ENCODE measurements at regions of chr10 and their contacts with region 1.

Region 1: DNA sequence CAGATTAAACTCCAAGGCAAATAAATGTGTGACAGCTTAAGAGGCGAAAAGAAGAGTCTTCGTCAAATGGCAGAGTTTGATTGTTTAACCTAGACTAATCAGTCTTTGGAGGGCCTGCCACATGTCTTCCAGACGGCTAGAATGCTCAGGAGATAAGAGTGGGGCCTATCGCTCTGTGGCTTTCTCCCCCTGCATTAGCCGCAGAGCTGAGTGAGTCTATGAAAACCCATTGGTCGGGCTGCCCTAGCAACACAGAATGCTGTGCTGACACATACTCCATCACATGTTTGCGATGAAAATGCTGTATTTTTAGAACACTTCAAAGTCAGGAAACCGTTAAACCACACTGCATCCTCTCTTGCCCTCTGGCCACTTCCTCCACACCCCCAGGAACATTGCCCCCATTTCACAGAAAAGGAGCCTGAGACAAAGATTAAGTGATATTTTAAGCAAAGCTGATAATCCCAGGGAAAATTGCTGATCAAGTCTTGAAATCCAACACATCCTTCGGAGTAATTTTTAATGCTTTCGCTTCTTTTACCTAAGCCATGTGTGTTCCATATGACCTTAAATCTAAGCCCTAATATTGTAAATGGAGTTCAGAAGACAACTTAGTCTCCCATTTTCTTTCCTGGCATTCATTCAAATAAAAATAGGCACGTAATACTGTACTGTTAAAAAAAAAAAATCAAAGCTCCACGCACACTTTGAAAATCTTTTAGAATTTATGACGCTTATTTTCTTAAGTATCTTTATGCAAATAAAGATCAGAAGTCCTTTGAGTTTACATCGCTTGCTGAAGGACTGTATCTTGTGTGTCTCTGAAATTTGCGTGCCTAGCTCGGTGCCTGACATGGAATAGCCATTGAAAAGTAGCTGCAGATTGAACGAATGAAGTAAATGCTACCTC is 161.2 kb downstream of the CELF2 start:
- DNase-seq: peak; percentile 90
- H3K4me3 Mint-ChIP-seq: peak overlapping the region; percentile 82
- H3K27ac Mint-ChIP-seq: no peak overlapping the region
- H3K4me1 Mint-ChIP-seq: peaks cover 88% of the 10 kb centered on the region
- H3K27me3 Mint-ChIP-seq: no peaks in the 10 kb centered on the region

Region 2: GRCh38 chr10:10576937-10577336 is 601.9 kb before region 1 on chr10:
- CTCF ChIA-PET with region 1: no interaction called
- intact Hi-C with region 1: no loop called
- DNase-seq: no peak
- H3K4me3 Mint-ChIP-seq: no peak overlapping the region
- H3K27ac Mint-ChIP-seq: no peak overlapping the region
- H3K4me1 Mint-ChIP-seq: no peaks in the 10 kb centered on the region
- H3K27me3 Mint-ChIP-seq: peaks cover 17% of the 10 kb centered on the region

Region 3: GRCh38 chr10:10623958-10624566 is 554.8 kb before region 1 on chr10:
- CTCF ChIA-PET with region 1: no interaction called
- intact Hi-C with region 1: no loop called
- DNase-seq: no peak
- H3K4me3 Mint-ChIP-seq: no peak overlapping the region
- H3K27ac Mint-ChIP-seq: no peak overlapping the region
- H3K4me1 Mint-ChIP-seq: no peaks in the 10 kb centered on the region
- H3K27me3 Mint-ChIP-seq: peaks cover 8% of the 10 kb centered on the region

Region 4: GRCh38 chr10:11145495-11145855 is 33.4 kb before region 1 on chr10:
- CTCF ChIA-PET with region 1: interaction called, 10 read pairs
- intact Hi-C with region 1: no loop called
- DNase-seq: peak; percentile 81
- H3K4me3 Mint-ChIP-seq: peak overlapping the region; percentile 76
- H3K27ac Mint-ChIP-seq: peak overlapping the region; percentile 94
- H3K4me1 Mint-ChIP-seq: peaks cover 83% of the 10 kb centered on the region
- H3K27me3 Mint-ChIP-seq: no peaks in the 10 kb centered on the region

Region 5: DNA sequence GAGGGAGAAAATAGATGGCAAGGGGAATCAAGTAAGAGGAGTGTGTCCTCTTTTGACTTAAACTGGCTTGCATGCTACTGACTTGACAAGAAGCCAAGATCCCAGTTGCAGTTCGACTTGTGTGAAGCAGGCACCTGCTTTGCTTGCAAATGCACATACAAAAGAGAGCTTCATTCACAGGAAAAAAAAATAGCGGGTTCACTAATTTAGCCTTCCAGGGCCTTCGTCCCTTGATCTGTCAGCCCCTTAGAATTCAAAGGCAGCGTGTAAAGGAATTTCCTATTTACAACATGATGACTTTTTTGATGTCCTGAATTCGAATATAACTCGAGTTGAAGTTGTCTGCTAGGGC is 30.9 kb after region 1 on chr10:
- CTCF ChIA-PET with region 1: no interaction called
- intact Hi-C with region 1: loop called (anchors 1 kb)
- DNase-seq: peak; percentile 38
- H3K4me3 Mint-ChIP-seq: peak overlapping the region; percentile 60
- H3K27ac Mint-ChIP-seq: peak overlapping the region; percentile 95
- H3K4me1 Mint-ChIP-seq: peaks cover 99% of the 10 kb centered on the region
- H3K27me3 Mint-ChIP-seq: no peaks in the 10 kb centered on the region

Region 6: GRCh38 chr10:11301571-11302111 is 122.8 kb after region 1 on chr10:
- CTCF ChIA-PET with region 1: no interaction called
- intact Hi-C with region 1: no loop called
- DNase-seq: no peak
- H3K4me3 Mint-ChIP-seq: no peak overlapping the region
- H3K27ac Mint-ChIP-seq: peak overlapping the region; percentile 39
- H3K4me1 Mint-ChIP-seq: peaks cover 5% of the 10 kb centered on the region
- H3K27me3 Mint-ChIP-seq: no peaks in the 10 kb centered on the region

Region 7: DNA sequence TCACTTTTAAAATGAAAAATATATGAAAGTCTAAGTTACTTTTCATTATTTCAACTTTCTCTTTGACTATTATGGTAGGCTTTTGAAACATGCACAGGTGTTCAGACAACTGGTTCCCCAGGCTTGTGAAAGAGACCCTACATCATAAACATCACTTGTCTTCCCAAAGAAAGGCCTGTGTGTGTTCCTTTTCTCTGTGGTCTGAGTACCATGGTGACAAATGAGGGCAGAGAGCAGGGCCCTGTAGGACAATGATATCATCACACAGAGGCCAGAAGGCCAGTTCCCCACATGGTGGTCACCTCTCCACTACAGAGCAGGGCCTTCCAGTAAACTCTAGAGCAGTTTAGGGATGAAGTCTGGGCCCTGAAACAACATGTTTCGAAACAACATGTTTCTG is 143.8 kb after region 1 on chr10:
- CTCF ChIA-PET with region 1: no interaction called
- intact Hi-C with region 1: loop called (anchors 2 kb)
- DNase-seq: no peak
- H3K4me3 Mint-ChIP-seq: no peak overlapping the region
- H3K27ac Mint-ChIP-seq: peak overlapping the region; percentile 95
- H3K4me1 Mint-ChIP-seq: peaks cover 75% of the 10 kb centered on the region
- H3K27me3 Mint-ChIP-seq: no peaks in the 10 kb centered on the region

Region 8: DNA sequence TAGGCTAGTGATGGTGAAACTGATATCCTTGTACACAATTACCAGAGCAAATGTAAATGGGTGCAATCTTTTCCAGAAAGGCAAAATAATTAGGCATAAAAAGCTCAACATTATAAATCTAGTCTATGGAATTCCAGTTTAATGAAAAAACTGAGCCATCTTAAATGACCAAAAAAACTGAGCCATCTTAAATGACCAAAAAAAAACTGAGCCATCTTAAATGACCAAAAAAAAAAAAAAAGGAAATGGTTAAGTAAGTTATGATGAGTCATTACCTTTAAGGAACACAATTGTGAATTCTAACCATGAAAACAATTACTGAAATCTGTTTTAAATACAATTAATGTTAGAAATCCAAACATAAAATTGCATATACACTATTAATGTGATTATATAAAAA is 407.3 kb after region 1 on chr10:
- CTCF ChIA-PET with region 1: no interaction called
- intact Hi-C with region 1: loop called (anchors 10 kb)
- DNase-seq: no peak
- H3K4me3 Mint-ChIP-seq: no peak overlapping the region
- H3K27ac Mint-ChIP-seq: no peak overlapping the region
- H3K4me1 Mint-ChIP-seq: peaks cover 27% of the 10 kb centered on the region
- H3K27me3 Mint-ChIP-seq: no peaks in the 10 kb centered on the region

Region 9: GRCh38 chr10:12129222-12130111 is 950.6 kb after region 1 on chr10 and contains the start of gene SEC61A2:
- CTCF ChIA-PET with region 1: no interaction called
- intact Hi-C with region 1: loop called (anchors 10 kb)
- DNase-seq: peak; percentile 97
- H3K4me3 Mint-ChIP-seq: peak within 1 kb of the TSS; percentile 83
- H3K27ac Mint-ChIP-seq: peak within 1 kb of the TSS; percentile 76
- H3K4me1 Mint-ChIP-seq: peaks cover 33% of the 10 kb centered on the region
- H3K27me3 Mint-ChIP-seq: no peaks in the 10 kb centered on the region
- total RNA-seq, gene SEC61A2: 18.2 to 20.0 TPM

Measured in activated naive CD4-positive, alpha-beta T cell treated with anti-CD3 and anti-CD28 coated beads for 36 hours (primary cell).